IMR-90 (cell line): ENCODE measurements at regions of chr12 and their contacts with region 1.

Region 1: GRCh38 chr12:114395755-114396152 is 10.2 kb downstream of the TBX5 start:
- DNase-seq: peak; percentile 90
- ATAC-seq: peak; percentile 35
- H3K4me3 ChIP-seq: peak overlapping the region; percentile 30; the same call in 1 of the 2 replicates
- H3K27ac ChIP-seq: peak overlapping the region; percentile 15
- H3K4me1 ChIP-seq: peaks cover 55% of the 10 kb centered on the region
- H3K27me3 ChIP-seq: no peaks in the 10 kb centered on the region
- CTCF ChIP-seq: no peak
- POLR2A ChIP-seq: no peak
- RAD21 ChIP-seq: 0 out of 2 replicates have a peak, but pooled peaks have one; percentile 5

Region 2: DNA sequence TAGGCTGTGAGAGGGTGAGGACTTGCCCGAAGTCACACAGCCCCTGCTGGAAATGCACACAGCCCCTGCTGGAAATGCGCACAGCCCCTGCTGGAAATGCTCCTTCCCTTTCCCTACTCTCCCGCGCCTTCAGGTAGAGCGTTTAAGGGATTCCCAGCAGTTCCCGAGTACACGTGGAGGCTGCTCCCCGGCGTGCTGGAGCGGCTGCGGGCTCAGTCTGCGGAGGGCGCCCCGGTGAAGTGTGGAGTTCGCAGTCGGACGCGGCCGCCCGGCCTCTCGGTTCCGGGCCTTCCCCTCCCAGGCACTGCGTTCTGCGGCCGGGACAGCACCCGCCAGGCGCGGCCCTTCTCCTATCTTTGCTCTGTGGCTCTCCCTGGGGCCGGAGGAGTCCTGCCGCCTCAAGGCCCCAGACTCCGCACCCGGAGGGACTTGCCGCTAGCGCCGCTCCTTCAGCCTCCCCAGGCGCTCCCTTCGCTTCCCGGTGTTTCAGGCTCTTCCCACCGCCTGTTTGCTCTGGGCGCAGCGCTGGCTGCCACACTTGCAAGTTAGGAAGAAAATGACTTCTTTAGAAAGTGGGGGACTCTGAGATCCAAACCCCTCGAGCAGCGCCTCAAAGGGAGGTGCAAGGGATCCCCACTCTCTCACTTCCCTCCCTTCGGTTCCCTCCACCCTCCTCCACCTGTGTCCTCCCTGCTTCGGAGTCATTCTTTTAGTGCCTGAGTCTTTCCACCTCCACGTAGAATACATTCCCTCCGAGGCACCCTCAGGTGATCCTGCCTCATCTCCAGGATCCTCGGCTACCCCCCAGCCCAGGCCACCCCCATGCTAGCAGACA is 18.5 kb after region 1 on chr12:
- CTCF ChIA-PET with region 1: no interaction called
- POLR2A ChIA-PET with region 1: interaction called, 3 read pairs
- dilution Hi-C with region 1: no loop called
- in situ Hi-C with region 1: no loop called
- intact Hi-C with region 1: loop called (anchors 2 kb)
- DNase-seq: peak; percentile 46
- ATAC-seq: peak; percentile 43
- H3K4me3 ChIP-seq: peak overlapping the region; percentile 37
- H3K27ac ChIP-seq: peak overlapping the region; percentile 100
- H3K4me1 ChIP-seq: peaks cover 30% of the 10 kb centered on the region
- H3K27me3 ChIP-seq: no peaks in the 10 kb centered on the region
- CTCF ChIP-seq: no peak
- POLR2A ChIP-seq: no peak
- RAD21 ChIP-seq: no peak

Region 3: GRCh38 chr12:115155665-115156645 is 760.2 kb after region 1 on chr12:
- CTCF ChIA-PET with region 1: no interaction called
- POLR2A ChIA-PET with region 1: no interaction called
- dilution Hi-C with region 1: no loop called
- in situ Hi-C with region 1: no loop called
- intact Hi-C with region 1: loop called (anchors 5 kb)
- DNase-seq: peak; percentile 95
- ATAC-seq: peak; percentile 88
- H3K4me3 ChIP-seq: no peak overlapping the region
- H3K27ac ChIP-seq: peak overlapping the region; percentile 55
- H3K4me1 ChIP-seq: no peaks in the 10 kb centered on the region; the same call in 1 of the 2 replicates
- H3K27me3 ChIP-seq: no peaks in the 10 kb centered on the region
- CTCF ChIP-seq: no peak
- POLR2A ChIP-seq: no peak; the same call in 1 of the 2 replicates
- RAD21 ChIP-seq: peak; percentile 31; the same call in 1 of the 2 replicates